B cell (primary cell): ENCODE measurements at regions of chr2 and their contacts with region 1.

Region 1: GRCh38 chr2:217076657-217077232 is 216.9 kb upstream of the TNP1 start:
- DNase-seq: no peak
- ATAC-seq: no peak
- H3K4me3 ChIP-seq: no peak overlapping the region
- H3K4me3 Mint-ChIP-seq: no peak overlapping the region
- H3K27ac ChIP-seq: no peak overlapping the region
- H3K27ac Mint-ChIP-seq: no peak overlapping the region
- H3K4me1 ChIP-seq: no peaks in the 10 kb centered on the region
- H3K4me1 Mint-ChIP-seq: no peaks in the 10 kb centered on the region
- H3K27me3 ChIP-seq: peaks cover 0 to 3% (median 0%) of the 10 kb centered on the region in 4 experiments
- H3K27me3 Mint-ChIP-seq: peaks cover 13% of the 10 kb centered on the region
- CTCF ChIP-seq: no peak

Region 2: GRCh38 chr2:217105733-217106649 is 29.2 kb after region 1 on chr2:
- CTCF ChIA-PET with region 1: no interaction called
- POLR2A ChIA-PET with region 1: interaction called, 12 read pairs
- intact Hi-C with region 1: no loop called
- DNase-seq: no peak
- ATAC-seq: no peak
- H3K4me3 ChIP-seq: no peak overlapping the region
- H3K4me3 Mint-ChIP-seq: no peak overlapping the region
- H3K27ac ChIP-seq: no peak overlapping the region
- H3K27ac Mint-ChIP-seq: no peak overlapping the region
- H3K4me1 ChIP-seq: no peaks in the 10 kb centered on the region
- H3K4me1 Mint-ChIP-seq: peaks cover 2% of the 10 kb centered on the region
- H3K27me3 ChIP-seq: peaks cover 0 to 2% (median 0%) of the 10 kb centered on the region in 4 experiments
- H3K27me3 Mint-ChIP-seq: peaks cover 8% of the 10 kb centered on the region
- CTCF ChIP-seq: no peak